Endothelial cell of umbilical vein (primary cell): ENCODE measurements at regions of chr9 and their contacts with region 1.

Region 1: DNA sequence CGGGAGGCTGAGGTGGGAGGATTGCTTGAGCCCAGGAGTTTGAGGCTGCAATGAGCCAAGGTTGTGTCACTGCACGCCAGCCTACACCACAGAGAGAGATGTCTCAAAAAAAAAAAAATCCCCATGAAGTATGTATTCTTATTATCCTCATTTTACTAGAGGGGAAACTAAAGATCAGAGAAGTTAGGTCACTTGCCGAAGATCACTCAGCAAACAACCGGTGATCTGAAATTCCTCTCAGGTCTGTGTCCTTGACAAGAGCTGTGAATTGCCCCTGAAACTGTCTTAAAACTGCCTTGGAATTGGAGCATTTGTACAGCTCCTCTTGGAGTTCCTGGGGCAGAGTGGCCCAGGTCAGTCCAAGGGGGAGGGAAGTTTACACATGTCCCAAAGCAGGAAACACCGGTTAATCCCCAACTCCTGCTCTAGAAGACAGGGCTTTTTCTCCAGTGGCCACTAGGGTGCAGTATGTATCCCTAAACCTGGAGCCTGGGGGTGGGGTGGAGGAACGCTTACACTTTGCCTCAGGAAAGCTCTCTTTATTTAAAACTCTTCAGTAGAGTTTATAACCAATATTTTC is 27.6 kb downstream of the AQP7 start:
- DNase-seq: peak; percentile 88
- H3K4me3 ChIP-seq: peak overlapping the region in 1 of 3 experiments; percentile 16
- H3K27ac ChIP-seq: no peak overlapping the region
- H3K4me1 ChIP-seq: peaks cover 6% of the 10 kb centered on the region
- H3K27me3 ChIP-seq: no peaks in the 10 kb centered on the region
- CTCF ChIP-seq: peak; percentile 85 to 91
- POLR2A ChIP-seq: no peak

Region 2: DNA sequence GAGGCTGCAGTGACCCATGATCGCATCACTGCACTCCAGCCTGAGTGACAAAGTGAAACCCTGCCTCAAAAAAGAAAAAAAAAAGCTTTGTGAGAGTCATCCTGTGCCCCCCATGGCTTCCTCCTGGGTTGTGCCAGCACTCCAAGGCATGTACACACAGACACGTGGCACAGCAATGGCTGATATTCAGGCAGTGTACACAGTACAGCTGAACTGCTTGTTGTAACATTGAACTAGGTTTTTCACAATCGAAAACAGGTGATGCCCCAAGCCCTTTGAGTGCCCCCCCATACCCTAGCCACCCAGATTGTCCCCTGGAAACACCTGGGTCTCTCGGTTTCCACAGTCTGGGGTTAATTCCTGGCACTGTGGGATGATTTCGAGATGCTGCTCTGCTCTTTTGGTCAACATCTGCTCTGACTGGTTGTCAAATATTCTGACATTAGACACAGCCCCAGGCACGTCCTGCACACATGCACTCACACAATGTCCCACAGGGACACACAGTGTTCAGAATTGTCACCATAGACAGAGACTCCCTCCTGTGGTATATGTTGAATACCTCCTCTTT is 125.6 kb before region 1 on chr9:
- CTCF ChIA-PET with region 1: no interaction called
- POLR2A ChIA-PET with region 1: no interaction called
- dilution Hi-C with region 1: no loop called
- intact Hi-C with region 1: no loop called
- DNase-seq: no peak
- H3K4me3 ChIP-seq: no peak overlapping the region
- H3K27ac ChIP-seq: no peak overlapping the region
- H3K4me1 ChIP-seq: no peaks in the 10 kb centered on the region
- H3K27me3 ChIP-seq: no peaks in the 10 kb centered on the region
- CTCF ChIP-seq: no peak
- POLR2A ChIP-seq: no peak

Region 3: GRCh38 chr9:33355933-33356332 is 18.8 kb before region 1 on chr9:
- CTCF ChIA-PET with region 1: interaction called, 17 read pairs
- POLR2A ChIA-PET with region 1: no interaction called
- dilution Hi-C with region 1: no loop called
- intact Hi-C with region 1: no loop called
- DNase-seq: no peak
- H3K4me3 ChIP-seq: no peak overlapping the region
- H3K27ac ChIP-seq: no peak overlapping the region
- H3K4me1 ChIP-seq: peaks cover 11% of the 10 kb centered on the region
- H3K27me3 ChIP-seq: no peaks in the 10 kb centered on the region
- CTCF ChIP-seq: no peak
- POLR2A ChIP-seq: no peak

Region 4: DNA sequence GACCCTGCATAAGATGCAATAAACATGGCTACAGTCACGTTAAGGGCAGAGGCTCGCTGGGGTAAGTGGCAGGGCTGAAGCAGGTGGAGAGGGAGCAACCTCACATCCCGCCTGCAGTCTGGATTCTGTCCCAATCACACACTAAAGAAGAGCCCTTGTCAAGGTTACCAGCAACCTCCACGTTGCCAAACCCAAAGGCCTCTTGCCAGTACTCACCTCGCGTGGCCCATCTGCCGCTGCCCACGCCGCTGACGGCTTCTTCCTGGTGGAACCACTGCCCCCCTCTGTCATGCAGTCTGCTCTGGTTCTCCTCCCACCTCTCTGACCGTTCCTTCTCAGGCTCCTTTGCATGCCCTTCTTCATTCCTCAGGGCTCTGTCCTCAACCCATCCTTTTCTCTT is 18.9 kb after region 1 on chr9:
- CTCF ChIA-PET with region 1: interaction called, 23 read pairs
- POLR2A ChIA-PET with region 1: no interaction called
- dilution Hi-C with region 1: no loop called
- intact Hi-C with region 1: loop called (anchors 1 kb)
- DNase-seq: no peak
- H3K4me3 ChIP-seq: no peak overlapping the region
- H3K27ac ChIP-seq: no peak overlapping the region
- H3K4me1 ChIP-seq: peaks cover 5% of the 10 kb centered on the region
- H3K27me3 ChIP-seq: no peaks in the 10 kb centered on the region
- CTCF ChIP-seq: no peak
- POLR2A ChIP-seq: no peak

Region 5: GRCh38 chr9:33415501-33416038 is 40.8 kb after region 1 on chr9:
- CTCF ChIA-PET with region 1: interaction called, 164 read pairs
- POLR2A ChIA-PET with region 1: no interaction called
- dilution Hi-C with region 1: no loop called
- intact Hi-C with region 1: loop called (anchors 1 kb)
- DNase-seq: peak; percentile 49
- H3K4me3 ChIP-seq: no peak overlapping the region
- H3K27ac ChIP-seq: no peak overlapping the region
- H3K4me1 ChIP-seq: no peaks in the 10 kb centered on the region
- H3K27me3 ChIP-seq: peaks cover 0 to 3% of the 10 kb centered on the region in 2 experiments
- CTCF ChIP-seq: peak; percentile 83 to 84
- POLR2A ChIP-seq: no peak

Region 6: GRCh38 chr9:33458444-33458843 is 83.7 kb after region 1 on chr9:
- CTCF ChIA-PET with region 1: interaction called, 146 read pairs
- POLR2A ChIA-PET with region 1: no interaction called
- dilution Hi-C with region 1: no loop called
- intact Hi-C with region 1: no loop called
- DNase-seq: peak; percentile 38
- H3K4me3 ChIP-seq: no peak overlapping the region
- H3K27ac ChIP-seq: no peak overlapping the region
- H3K4me1 ChIP-seq: peaks cover 14% of the 10 kb centered on the region
- H3K27me3 ChIP-seq: no peaks in the 10 kb centered on the region
- CTCF ChIP-seq: no peak
- POLR2A ChIP-seq: no peak

Region 7: GRCh38 chr9:33473643-33474352 is 99.1 kb after region 1 on chr9 and contains the start of gene NOL6:
- CTCF ChIA-PET with region 1: interaction called, 22 read pairs
- POLR2A ChIA-PET with region 1: no interaction called
- dilution Hi-C with region 1: no loop called
- intact Hi-C with region 1: no loop called
- DNase-seq: peak; percentile 100
- H3K4me3 ChIP-seq: peak within 1 kb of the TSS; percentile 62 to 96 (median 89)
- H3K27ac ChIP-seq: peak within 1 kb of the TSS; percentile 70
- H3K4me1 ChIP-seq: peaks cover 15% of the 10 kb centered on the region
- H3K27me3 ChIP-seq: no peaks in the 10 kb centered on the region
- CTCF ChIP-seq: no peak
- POLR2A ChIP-seq: peak; percentile 94
- total RNA-seq, gene NOL6: 42.3 and 45.1 TPM in 2 replicates